ENCODE measurements at regions of chr16 and their contacts with region 1.

Region 1: GRCh38 chr16:77971306-77972271 is 50.8 kb upstream of the CLEC3A start:
- DNase-seq: peak; percentile 47 to 59 (median 50)
- H3K4me3 ChIP-seq: no peak overlapping the region
- H3K4me3 Mint-ChIP-seq: no peak overlapping the region
- H3K27ac ChIP-seq: no peak overlapping the region
- H3K27ac Mint-ChIP-seq: no peak overlapping the region
- H3K4me1 ChIP-seq: no peaks in the 10 kb centered on the region
- H3K4me1 Mint-ChIP-seq: peaks cover 0 to 2% (median 0%) of the 10 kb centered on the region in 4 donors
- H3K27me3 ChIP-seq: no peaks in the 10 kb centered on the region
- H3K27me3 Mint-ChIP-seq: peaks cover 12 to 16% of the 10 kb centered on the region in 2 donors

Region 2: GRCh38 chr16:77236063-77236511 is 735.5 kb before region 1 on chr16:
- CTCF ChIA-PET with region 1: no interaction called
- POLR2A ChIA-PET with region 1: no interaction called
- intact Hi-C with region 1: loop called (anchors 1 kb)
- DNase-seq: peak; percentile 80 to 87 (median 83)
- H3K4me3 ChIP-seq: peak overlapping the region in 1 of 2 donors; percentile 39
- H3K4me3 Mint-ChIP-seq: peak overlapping the region; percentile 52 to 85 (median 73)
- H3K27ac ChIP-seq: no peak overlapping the region
- H3K27ac Mint-ChIP-seq: peak overlapping the region in 2 of 7 donors; percentile 28 to 37
- H3K4me1 ChIP-seq: no peaks in the 10 kb centered on the region
- H3K4me1 Mint-ChIP-seq: peaks cover 2 to 6% (median 5%) of the 10 kb centered on the region in 4 donors
- H3K27me3 ChIP-seq: no peaks in the 10 kb centered on the region
- H3K27me3 Mint-ChIP-seq: peaks cover 8 to 23% of the 10 kb centered on the region in 2 donors

Region 3: DNA sequence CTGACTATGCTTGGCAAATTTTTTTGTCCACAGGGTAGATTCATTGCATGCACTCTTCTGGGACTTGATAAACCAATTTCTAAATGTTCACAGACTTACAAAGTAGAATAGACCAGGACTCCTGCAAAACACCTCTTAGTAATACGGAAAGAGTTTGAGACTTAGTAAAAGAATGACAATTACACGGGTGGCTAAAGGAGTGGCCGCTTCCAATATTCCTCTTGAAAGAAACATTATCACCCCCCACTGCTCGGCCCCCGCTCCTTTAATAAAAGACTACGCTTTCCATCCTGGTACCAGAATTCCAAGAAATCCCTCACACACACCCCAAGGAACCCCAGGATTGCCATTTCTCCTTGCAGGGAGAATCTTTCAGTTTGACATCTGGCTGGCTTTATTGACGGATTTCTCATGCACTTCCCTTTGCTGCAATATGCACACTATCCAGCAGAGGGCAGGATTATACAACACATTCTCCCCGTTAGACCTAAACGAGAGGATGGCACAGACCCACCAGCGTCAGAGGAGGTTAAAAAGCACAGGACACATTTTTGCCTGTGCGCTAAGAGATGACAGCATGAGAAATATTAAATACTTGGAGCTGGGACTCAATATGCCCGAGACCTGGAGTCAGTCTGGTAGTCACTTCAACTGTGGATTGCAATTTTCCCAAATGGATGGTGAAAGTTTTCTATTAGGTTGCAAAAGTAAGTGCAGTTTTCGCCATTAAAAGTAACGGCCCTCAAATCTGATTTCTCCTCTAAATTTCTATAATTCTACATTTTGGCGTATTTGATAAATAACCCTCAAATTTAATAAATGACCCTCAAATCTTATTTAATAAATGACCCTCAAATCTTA is 295.9 kb before region 1 on chr16:
- CTCF ChIA-PET with region 1: interaction called, 91 read pairs
- POLR2A ChIA-PET with region 1: no interaction called
- intact Hi-C with region 1: loop called (anchors 1 kb)
- DNase-seq: peak; percentile 48 to 62 (median 60)
- H3K4me3 ChIP-seq: no peak overlapping the region
- H3K4me3 Mint-ChIP-seq: no peak overlapping the region
- H3K27ac ChIP-seq: no peak overlapping the region
- H3K27ac Mint-ChIP-seq: no peak overlapping the region
- H3K4me1 ChIP-seq: no peaks in the 10 kb centered on the region
- H3K4me1 Mint-ChIP-seq: no peaks in the 10 kb centered on the region
- H3K27me3 ChIP-seq: no peaks in the 10 kb centered on the region
- H3K27me3 Mint-ChIP-seq: peaks cover 2 to 5% of the 10 kb centered on the region in 2 donors

Region 4: GRCh38 chr16:77951775-77952174 is 19.8 kb before region 1 on chr16:
- CTCF ChIA-PET with region 1: interaction called, 15 read pairs
- POLR2A ChIA-PET with region 1: no interaction called
- intact Hi-C with region 1: no loop called
- DNase-seq: no peak
- H3K4me3 ChIP-seq: no peak overlapping the region
- H3K4me3 Mint-ChIP-seq: no peak overlapping the region
- H3K27ac ChIP-seq: no peak overlapping the region
- H3K27ac Mint-ChIP-seq: no peak overlapping the region
- H3K4me1 ChIP-seq: no peaks in the 10 kb centered on the region
- H3K4me1 Mint-ChIP-seq: no peaks in the 10 kb centered on the region
- H3K27me3 ChIP-seq: no peaks in the 10 kb centered on the region
- H3K27me3 Mint-ChIP-seq: peaks cover 14 to 19% of the 10 kb centered on the region in 2 donors

Region 5: DNA sequence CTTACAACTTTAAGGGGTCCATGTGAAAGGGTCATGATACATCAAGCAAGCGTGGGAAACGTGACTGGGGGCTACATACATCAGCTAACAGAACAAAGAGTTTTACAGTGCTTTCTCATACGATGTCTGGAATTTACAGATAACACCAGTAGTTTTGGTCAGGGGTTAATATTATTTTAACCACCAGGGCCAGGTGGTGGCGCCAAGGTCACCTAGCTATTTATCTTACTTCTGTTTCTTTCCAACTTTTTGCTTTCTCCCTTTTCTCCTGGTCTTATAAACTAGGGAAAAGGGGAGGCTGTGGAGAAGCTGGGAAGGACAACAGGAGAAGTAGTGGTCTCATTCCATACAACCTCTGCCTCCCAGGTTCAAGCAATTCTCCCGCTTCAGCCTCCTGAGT is 88.7 kb after region 1 on chr16:
- CTCF ChIA-PET with region 1: no interaction called
- POLR2A ChIA-PET with region 1: no interaction called
- intact Hi-C with region 1: no loop called
- DNase-seq: no peak
- H3K4me3 ChIP-seq: no peak overlapping the region
- H3K4me3 Mint-ChIP-seq: no peak overlapping the region
- H3K27ac ChIP-seq: no peak overlapping the region
- H3K27ac Mint-ChIP-seq: no peak overlapping the region
- H3K4me1 ChIP-seq: no peaks in the 10 kb centered on the region
- H3K4me1 Mint-ChIP-seq: peaks cover 0 to 3% (median 0%) of the 10 kb centered on the region in 4 donors
- H3K27me3 ChIP-seq: no peaks in the 10 kb centered on the region
- H3K27me3 Mint-ChIP-seq: peaks cover 7 to 18% of the 10 kb centered on the region in 2 donors

Measured in CD4-positive, alpha-beta memory T cell (primary cell).